Activated naive CD4-positive, alpha-beta T cell treated with anti-CD3 and anti-CD28 coated beads for 36 hours (primary cell): ENCODE measurements at regions of chr11 and their contacts with region 1.

Region 1: GRCh38 chr11:108008656-108009496 is at the start of gene CUL5:
- DNase-seq: peak; percentile 92
- H3K4me3 Mint-ChIP-seq: peak within 1 kb of the TSS; percentile 93
- H3K27ac Mint-ChIP-seq: peak within 1 kb of the TSS; percentile 76
- H3K4me1 Mint-ChIP-seq: peaks cover 15% of the 10 kb centered on the region
- H3K27me3 Mint-ChIP-seq: no peaks in the 10 kb centered on the region
- total RNA-seq, gene CUL5: 25.9 to 26.2 TPM

Region 2: DNA sequence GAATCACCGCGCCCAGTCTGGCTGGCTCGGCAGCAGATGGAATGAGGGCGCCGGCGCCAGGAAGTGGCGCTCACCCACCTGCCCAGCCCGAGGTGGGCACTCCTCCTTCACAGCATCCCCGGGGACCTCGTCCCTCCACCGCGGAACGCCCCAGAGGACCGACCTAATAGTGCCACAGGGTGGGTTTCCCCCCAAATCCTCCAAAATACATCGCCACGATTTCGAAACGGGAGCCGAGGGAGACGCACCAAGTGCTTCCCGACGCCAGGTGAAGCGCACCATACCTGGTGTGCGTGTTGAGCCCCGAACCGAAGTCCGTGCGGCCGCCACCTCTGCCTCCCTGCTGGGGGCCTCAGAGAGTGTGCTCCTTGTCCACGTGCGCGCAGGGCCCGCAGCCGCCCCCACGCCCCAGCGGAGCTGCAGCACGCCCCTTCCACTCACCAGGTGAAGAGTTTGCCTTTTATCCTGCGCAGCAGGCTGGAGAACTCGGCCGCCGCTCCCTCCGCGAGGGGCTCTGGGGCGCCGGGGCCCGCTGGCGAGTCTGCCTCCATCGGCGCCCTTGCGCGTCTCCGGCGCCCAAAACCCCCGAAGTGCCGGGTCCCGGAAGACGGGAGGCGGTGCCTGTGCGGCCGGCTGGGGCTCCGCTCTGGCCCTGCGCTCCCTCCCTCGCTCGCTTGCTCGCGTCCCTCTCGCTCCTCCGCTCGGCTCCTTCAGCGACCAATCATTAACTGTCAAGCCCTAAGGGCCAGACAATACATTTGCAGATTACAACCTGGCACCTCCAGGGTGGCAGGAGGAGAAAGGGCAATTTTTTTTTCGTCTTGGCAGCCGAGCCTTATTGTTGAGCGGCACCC is 150.4 kb before region 1 on chr11 and contains the start of gene SLC35F2:
- CTCF ChIA-PET with region 1: no interaction called
- intact Hi-C with region 1: loop called (anchors 2 kb)
- DNase-seq: peak; percentile 77
- H3K4me3 Mint-ChIP-seq: peak within 1 kb of the TSS; percentile 95
- H3K27ac Mint-ChIP-seq: peak within 1 kb of the TSS; percentile 91
- H3K4me1 Mint-ChIP-seq: peaks cover 21% of the 10 kb centered on the region
- H3K27me3 Mint-ChIP-seq: no peaks in the 10 kb centered on the region
- total RNA-seq, gene SLC35F2: 18.2 to 20.5 TPM

Region 3: DNA sequence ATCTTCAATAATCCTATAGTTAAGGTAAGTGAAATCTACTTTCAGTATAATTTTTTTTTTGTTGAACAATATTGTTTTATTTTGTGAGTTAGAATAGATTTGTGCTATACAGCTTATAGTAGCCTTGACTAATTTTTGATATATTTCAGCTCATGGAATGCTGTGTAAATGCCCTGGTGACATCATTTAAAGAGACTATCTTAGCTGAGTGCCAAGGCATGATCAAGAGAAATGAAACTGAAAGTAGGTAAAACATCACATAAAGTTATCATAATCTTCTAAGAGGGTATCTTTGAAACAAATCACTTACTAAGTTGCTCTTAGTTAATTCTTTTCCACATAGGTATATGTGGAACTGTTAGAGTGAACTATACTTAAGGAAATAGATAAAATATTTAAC is 61.1 kb after region 1 on chr11:
- CTCF ChIA-PET with region 1: interaction called, 5 read pairs
- intact Hi-C with region 1: loop called (anchors 2 kb)
- DNase-seq: no peak
- H3K4me3 Mint-ChIP-seq: no peak overlapping the region
- H3K27ac Mint-ChIP-seq: no peak overlapping the region
- H3K4me1 Mint-ChIP-seq: peaks cover 17% of the 10 kb centered on the region
- H3K27me3 Mint-ChIP-seq: no peaks in the 10 kb centered on the region

Region 4: DNA sequence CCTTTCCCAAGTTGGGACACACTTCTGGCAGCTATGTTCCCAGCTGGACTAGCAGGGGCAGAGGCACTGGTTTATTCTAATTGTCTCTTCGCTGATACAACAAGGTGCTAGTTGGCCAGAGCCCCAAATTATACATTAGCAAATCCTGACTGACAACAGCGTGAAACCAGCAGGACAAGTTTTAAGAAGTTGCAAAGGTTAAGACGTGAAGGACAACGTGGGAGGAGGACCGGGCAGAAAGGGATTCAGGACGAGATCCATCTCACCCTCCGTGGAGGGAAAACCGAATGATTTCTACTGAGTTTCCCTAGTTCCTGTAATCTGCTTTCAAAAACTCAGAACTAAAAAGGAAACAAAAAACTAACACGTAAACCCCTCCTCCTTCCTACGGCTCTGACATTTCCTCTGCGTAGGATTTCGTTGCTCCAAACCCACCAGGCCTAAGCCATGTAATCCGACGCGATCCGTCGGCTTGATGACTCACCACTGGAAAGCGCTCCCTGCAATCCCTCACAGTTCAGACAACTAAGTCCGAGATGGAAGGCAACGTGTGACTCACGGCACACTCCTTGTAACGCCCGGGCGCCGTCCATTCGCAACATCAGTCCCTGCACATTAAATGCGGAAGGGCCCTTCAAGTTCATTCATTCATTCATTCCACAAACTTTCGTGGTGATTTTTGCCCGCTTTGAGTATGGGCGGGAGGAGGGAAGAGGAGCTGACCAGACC is 488.6 kb after region 1 on chr11:
- CTCF ChIA-PET with region 1: interaction called, 3 read pairs
- intact Hi-C with region 1: loop called (anchors 10 kb)
- DNase-seq: peak; percentile 84
- H3K4me3 Mint-ChIP-seq: peak overlapping the region; percentile 85
- H3K27ac Mint-ChIP-seq: peak overlapping the region; percentile 92
- H3K4me1 Mint-ChIP-seq: peaks cover 16% of the 10 kb centered on the region
- H3K27me3 Mint-ChIP-seq: no peaks in the 10 kb centered on the region

Region 5: DNA sequence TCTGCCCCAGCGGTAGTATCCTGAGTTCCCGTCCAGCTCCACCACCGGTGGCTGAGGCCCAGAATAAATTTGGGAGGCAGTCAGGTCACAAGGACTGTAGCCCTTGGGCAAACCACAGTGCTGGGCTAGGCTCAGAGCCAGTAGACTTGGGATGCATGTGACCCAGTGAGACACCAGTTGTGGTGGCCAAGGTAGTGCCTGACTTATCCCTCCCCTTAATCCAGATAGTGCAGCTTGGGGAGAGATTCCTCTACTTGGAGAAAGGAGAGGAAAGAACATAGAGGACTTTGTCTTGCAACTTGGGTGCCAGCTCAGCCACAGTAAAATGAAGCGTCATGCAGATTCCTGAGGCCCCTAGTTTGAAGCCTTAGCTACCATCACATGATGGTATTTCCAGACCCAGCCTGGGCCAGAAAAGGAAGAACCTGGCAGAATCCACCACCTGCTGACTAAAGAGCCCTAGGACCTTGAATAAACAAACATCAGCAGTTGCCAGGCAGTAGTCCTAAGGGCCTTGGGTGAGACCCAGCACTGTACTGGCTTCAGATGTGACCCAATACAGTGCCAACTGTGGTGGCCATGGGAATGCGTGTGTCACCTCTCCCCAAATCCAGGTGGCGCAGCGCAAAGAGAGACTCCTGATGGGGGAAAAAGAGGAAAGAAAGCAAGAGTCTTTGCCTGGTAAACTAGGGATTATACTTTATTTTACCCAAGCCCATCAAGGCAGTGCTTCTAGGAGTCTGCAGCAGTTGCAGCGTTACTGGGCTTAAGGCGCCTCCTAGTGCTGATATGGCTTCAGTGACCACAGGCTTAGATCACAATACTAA is 639.0 kb after region 1 on chr11:
- CTCF ChIA-PET with region 1: interaction called, 4 read pairs
- intact Hi-C with region 1: loop called (anchors 2 kb)
- DNase-seq: peak; percentile 86
- H3K4me3 Mint-ChIP-seq: no peak overlapping the region
- H3K27ac Mint-ChIP-seq: no peak overlapping the region
- H3K4me1 Mint-ChIP-seq: no peaks in the 10 kb centered on the region
- H3K27me3 Mint-ChIP-seq: no peaks in the 10 kb centered on the region